ENCODE measurements at regions of chr17 and their contacts with region 1.

Region 1: DNA sequence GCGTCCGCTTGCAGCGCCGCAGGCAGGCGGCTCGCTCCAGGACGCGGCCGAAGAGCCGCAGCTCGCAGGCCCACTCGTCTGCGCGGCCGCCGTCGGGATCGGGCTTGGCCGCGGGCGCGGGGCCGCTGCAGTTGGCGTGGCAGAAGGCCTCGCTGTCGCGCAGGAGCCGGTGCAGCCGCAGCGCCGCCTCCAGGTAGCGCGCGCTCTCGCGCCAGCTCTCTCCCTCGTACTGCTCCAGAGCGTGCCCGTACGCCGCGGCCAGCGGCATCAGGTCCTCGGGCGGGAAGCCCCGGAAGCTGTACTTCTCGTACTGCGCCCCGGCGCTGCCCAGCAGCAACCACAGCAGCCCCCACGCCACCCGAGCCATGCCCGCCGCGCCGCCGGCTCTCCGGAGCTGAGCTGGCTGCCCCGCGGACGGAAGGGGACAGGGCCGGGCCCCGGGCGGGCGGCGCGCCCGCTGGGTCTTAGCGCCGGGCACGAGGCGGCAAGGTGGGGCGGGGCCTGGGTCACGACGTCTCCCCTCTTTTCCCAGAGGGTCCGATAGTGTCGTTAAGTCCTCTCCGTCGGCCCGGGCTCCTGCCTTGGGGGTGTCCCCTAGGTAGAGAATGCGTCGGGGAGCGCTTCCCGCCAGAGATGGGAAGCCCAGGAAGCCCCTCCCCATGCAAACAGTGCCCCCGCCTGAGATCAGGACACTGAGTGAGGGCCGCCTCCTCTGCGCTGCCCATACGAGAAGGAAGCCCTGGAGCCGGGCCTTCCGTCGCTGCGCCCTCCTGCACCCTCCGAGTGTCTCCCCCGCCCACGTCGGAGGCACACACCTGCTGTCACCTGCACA is at the start of gene P3H4:
- DNase-seq: peak; percentile 90
- H3K4me3 ChIP-seq: peak within 1 kb of the TSS; percentile 51 to 88 (median 74)
- H3K27ac ChIP-seq: peak within 1 kb of the TSS; percentile 80 to 84 (median 80)
- H3K4me1 ChIP-seq: peaks cover 0 to 48% (median 38%) of the 10 kb centered on the region in 4 donors
- H3K27me3 ChIP-seq: no peaks in the 10 kb centered on the region
- CTCF ChIP-seq: peak in 3 of 4 experiments; percentile 24 to 75 (median 28)
- EP300 ChIP-seq: no peak
- POLR2A ChIP-seq: no peak
- total RNA-seq, gene P3H4: 9.9 to 12.3 (median 11.3) TPM

Region 2: DNA sequence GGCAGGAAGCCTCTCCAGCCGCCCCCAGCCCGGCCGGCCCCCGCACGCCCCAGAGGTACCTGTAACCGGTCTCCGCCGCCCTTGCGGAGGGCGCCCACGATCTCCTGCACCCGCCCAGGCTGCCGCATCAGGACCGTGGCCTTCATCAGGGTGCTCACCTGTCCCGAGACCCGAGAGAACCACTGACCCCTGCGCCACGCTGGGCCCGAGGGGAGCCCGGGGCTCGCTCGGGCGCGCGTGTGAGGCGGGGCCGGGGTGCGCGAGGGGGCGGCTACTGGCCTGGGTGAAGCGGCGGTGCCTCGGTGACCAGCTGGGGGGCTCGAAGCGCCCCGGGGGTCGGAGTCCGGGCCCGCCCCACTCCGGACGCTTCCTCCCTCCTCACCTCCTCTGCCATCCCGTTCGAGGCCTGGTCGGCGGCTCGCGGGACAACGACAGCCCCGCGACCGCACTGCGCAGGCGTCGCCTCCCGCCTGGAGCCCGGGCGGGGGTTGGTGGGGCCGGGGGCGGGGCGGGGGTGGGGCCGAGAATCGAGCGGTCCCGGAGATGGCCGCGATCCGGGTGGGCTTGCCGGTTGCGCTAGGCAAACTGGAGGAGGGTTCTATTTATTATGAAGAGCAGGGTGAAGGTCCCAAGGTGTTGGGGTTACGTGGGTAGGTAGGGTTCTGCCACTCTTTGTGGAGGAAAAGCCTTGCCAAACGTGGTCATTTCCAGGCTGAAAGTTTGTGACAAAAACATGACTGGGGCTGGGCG is 24.2 kb after region 1 on chr17 and contains the start of gene NT5C3B:
- intact Hi-C with region 1: loop called (anchors 2 kb)
- DNase-seq: peak; percentile 82
- H3K4me3 ChIP-seq: peak within 1 kb of the TSS; percentile 68 to 97 (median 84)
- H3K27ac ChIP-seq: peak within 1 kb of the TSS; percentile 77 to 91 (median 86)
- H3K4me1 ChIP-seq: peaks cover 0 to 17% (median 15%) of the 10 kb centered on the region in 4 donors
- H3K27me3 ChIP-seq: no peaks in the 10 kb centered on the region
- CTCF ChIP-seq: no peak
- EP300 ChIP-seq: no peak
- POLR2A ChIP-seq: no peak
- total RNA-seq, gene NT5C3B: 58.5 to 104 (median 69.2) TPM

Region 3: GRCh38 chr17:41864836-41865595 is 53.3 kb after region 1 on chr17 and contains the start of gene KLHL11:
- intact Hi-C with region 1: loop called (anchors 2 kb)
- DNase-seq: peak; percentile 94
- H3K4me3 ChIP-seq: peak within 1 kb of the TSS; percentile 82 to 98 (median 90)
- H3K27ac ChIP-seq: peak within 1 kb of the TSS; percentile 93 to 96 (median 96)
- H3K4me1 ChIP-seq: peaks cover 0 to 30% (median 26%) of the 10 kb centered on the region in 4 donors
- H3K27me3 ChIP-seq: no peaks in the 10 kb centered on the region
- CTCF ChIP-seq: no peak
- EP300 ChIP-seq: no peak
- POLR2A ChIP-seq: peak; percentile 58 to 64
- total RNA-seq, gene KLHL11: 16.1 to 21.6 (median 19.2) TPM

Region 4: DNA sequence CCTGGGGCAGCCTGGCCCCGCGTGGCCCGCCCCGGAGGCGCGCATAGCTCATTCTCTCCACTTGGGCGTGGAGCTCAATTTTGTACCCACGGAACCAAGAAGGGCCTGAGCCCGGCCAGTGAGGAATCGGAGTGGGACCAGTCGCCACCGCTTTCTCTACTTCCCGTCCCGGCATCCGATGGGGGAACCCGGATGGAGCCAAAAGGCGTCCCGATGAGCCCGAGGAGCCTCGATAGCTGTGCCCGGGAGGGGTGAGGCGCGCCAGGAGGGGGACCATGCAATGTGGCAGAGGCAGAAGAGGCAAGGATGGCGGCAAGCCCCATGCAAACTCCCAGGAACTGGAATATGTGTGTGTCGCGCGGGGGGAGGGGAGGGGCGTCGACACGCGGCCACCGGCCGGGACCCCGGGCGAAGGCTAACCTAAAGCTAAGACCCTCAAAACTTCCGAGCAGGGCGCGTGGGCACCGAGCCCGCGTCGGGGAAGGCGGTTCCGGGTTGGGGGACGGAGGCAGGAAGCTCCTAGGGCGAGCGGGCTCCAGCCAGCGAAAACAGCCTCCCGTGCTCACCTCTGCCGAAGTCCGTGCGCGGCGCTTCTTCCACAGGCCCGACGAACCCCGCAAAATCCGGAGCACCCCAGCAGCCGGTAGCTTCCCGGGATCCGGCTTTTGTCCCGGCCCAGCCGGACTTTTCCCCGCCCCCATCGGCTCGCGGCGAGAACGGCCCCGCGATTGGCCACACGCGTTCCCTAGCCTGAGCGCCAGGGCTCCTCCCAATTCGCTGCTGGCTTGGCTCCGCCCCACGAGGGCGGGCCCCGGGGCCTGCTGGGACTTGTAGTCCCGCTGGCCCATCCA is 106.8 kb after region 1 on chr17 and contains the start of gene ACLY:
- intact Hi-C with region 1: loop called (anchors 5 kb)
- DNase-seq: peak; percentile 98
- H3K4me3 ChIP-seq: peak within 1 kb of the TSS; percentile 58 to 85 (median 74)
- H3K27ac ChIP-seq: peak within 1 kb of the TSS; percentile 87 to 96 (median 91)
- H3K4me1 ChIP-seq: peaks cover 0 to 33% (median 24%) of the 10 kb centered on the region in 4 donors
- H3K27me3 ChIP-seq: no peaks in the 10 kb centered on the region
- CTCF ChIP-seq: no peak
- EP300 ChIP-seq: no peak
- POLR2A ChIP-seq: peak; percentile 79 to 81
- total RNA-seq, gene ACLY: 41.0 to 56.2 (median 44.7) TPM

Measured in sigmoid colon (tissue), 7 donors.